ENCODE measurements at regions of chr2 and their contacts with region 1.

Region 1: DNA sequence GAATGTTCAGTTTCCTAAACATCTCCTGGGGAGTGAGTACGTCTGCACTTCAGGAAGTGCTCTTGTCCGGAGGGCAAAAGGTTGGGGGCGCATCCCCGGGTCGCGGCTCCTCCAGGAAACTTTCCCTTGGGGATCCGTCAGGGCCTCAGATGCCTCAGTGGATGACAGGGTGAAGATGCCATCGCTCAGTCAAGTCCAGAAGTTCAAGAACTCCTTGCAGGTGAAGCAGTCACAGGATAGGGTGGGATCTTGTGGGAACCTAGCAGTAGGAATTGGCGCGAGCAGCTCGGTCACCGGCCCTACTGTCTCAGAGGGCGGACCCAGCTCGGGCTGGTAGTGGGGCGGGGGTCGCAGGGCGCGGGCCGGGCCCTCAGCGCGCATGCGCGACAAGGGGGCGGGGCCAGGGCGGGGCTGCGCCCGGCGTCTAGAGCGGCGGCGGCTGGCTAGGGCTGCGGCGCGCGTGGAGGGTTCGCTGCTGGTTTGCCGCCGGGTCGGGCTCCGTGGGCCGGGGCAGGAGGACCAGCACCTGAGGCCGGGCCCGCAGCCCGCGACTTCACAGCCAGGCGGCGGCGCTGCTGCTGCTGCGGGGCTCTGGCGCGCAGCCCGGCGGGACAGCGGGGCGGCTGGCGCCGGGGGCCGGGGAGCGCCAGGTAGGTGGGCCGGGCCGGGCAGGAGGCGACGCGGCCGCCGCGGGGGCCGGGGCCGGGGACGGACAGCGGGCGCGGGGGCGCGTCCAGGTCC is at the start of gene INPP4A:
- DNase-seq: peak; percentile 66 to 86 (median 77)
- H3K4me3 ChIP-seq: peak within 1 kb of the TSS; percentile 75
- H3K4me3 Mint-ChIP-seq: peak within 1 kb of the TSS; percentile 92 to 98 (median 95)
- H3K27ac ChIP-seq: peak within 1 kb of the TSS; percentile 75
- H3K27ac Mint-ChIP-seq: peak within 1 kb of the TSS; percentile 93 to 99 (median 98)
- H3K4me1 ChIP-seq: peaks cover 33% of the 10 kb centered on the region
- H3K4me1 Mint-ChIP-seq: peaks cover 44 to 58% (median 50%) of the 10 kb centered on the region in 3 donors
- H3K27me3 ChIP-seq: no peaks in the 10 kb centered on the region
- H3K27me3 Mint-ChIP-seq: peaks cover 0 to 2% of the 10 kb centered on the region in 2 donors
- total RNA-seq, gene INPP4A: 41.0 to 46.9 TPM

Region 2: DNA sequence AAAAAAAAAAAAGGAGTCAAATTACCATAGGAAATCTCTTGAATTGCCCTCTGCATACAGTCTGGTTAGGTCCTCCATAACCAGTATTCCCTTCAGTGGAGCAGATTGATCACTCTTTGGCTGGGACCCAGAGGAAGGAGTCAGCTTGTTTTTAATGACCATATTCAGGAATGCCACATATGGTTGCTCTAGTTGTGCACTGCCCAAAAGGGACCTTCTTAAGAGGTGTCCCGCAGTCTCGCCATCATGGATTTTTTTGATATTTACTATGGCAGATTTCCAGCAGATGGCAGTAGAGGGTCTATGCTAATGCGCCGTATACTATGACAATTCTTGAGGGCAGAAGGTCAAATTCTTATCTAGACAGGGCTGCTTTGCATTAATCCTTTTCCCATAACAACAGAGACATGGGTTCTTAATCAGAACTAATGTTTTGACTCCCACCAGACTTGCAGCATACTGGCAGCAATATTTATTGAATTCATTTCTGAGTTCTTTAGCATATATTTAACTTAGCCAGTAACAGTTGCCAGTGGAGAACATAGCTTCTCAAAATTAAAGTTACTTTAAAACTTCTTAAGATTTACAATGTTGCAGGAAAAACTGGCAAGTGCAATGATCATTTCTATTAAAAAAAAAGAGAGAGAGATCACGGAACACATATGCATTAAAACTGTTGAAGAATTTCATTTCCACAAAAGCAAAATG is 31.7 kb before region 1 on chr2:
- CTCF ChIA-PET with region 1: interaction called, 10 read pairs
- POLR2A ChIA-PET with region 1: no interaction called
- DNase-seq: peak; percentile 27 to 74 (median 56)
- H3K4me3 ChIP-seq: no peak overlapping the region
- H3K4me3 Mint-ChIP-seq: no peak overlapping the region
- H3K27ac ChIP-seq: no peak overlapping the region
- H3K27ac Mint-ChIP-seq: peak overlapping the region in 2 of 8 donors; percentile 15 to 58
- H3K4me1 ChIP-seq: no peaks in the 10 kb centered on the region
- H3K4me1 Mint-ChIP-seq: peaks cover 6 to 8% (median 6%) of the 10 kb centered on the region in 3 donors
- H3K27me3 ChIP-seq: no peaks in the 10 kb centered on the region
- H3K27me3 Mint-ChIP-seq: peaks cover 0 to 6% of the 10 kb centered on the region in 2 donors

Region 3: GRCh38 chr2:98455494-98455976 is 10.9 kb after region 1 on chr2:
- CTCF ChIA-PET with region 1: interaction called, 10 read pairs
- POLR2A ChIA-PET with region 1: interaction called, 4 read pairs
- DNase-seq: peak in 3 of 5 donors; percentile 53 to 66 (median 59)
- H3K4me3 ChIP-seq: peak overlapping the region; percentile 15
- H3K4me3 Mint-ChIP-seq: peak overlapping the region; percentile 37 to 85 (median 68)
- H3K27ac ChIP-seq: peak overlapping the region; percentile 64
- H3K27ac Mint-ChIP-seq: peak overlapping the region; percentile 91 to 98 (median 94)
- H3K4me1 ChIP-seq: peaks cover 98% of the 10 kb centered on the region
- H3K4me1 Mint-ChIP-seq: peaks cover 90 to 100% (median 98%) of the 10 kb centered on the region in 3 donors
- H3K27me3 ChIP-seq: no peaks in the 10 kb centered on the region
- H3K27me3 Mint-ChIP-seq: no peaks in the 10 kb centered on the region

Region 4: GRCh38 chr2:98580656-98581284 is 136.2 kb after region 1 on chr2:
- CTCF ChIA-PET with region 1: no interaction called
- POLR2A ChIA-PET with region 1: no interaction called
- DNase-seq: no peak
- H3K4me3 ChIP-seq: no peak overlapping the region
- H3K4me3 Mint-ChIP-seq: no peak overlapping the region
- H3K27ac ChIP-seq: no peak overlapping the region
- H3K27ac Mint-ChIP-seq: peak overlapping the region in 2 of 8 donors; percentile 0 to 50
- H3K4me1 ChIP-seq: no peaks in the 10 kb centered on the region
- H3K4me1 Mint-ChIP-seq: no peaks in the 10 kb centered on the region
- H3K27me3 ChIP-seq: no peaks in the 10 kb centered on the region
- H3K27me3 Mint-ChIP-seq: no peaks in the 10 kb centered on the region